ENCODE measurements at regions of chrX and their contacts with region 1.

Region 1: GRCh38 chrX:37745354-37745753 is 34.5 kb upstream of the CYBB start:
- H3K4me3 Mint-ChIP-seq: no peak overlapping the region
- H3K27ac Mint-ChIP-seq: peak overlapping the region; percentile 87
- H3K4me1 Mint-ChIP-seq: peaks cover 31% of the 10 kb centered on the region
- H3K27me3 Mint-ChIP-seq: no peaks in the 10 kb centered on the region

Region 2: GRCh38 chrX:37787423-37787869 is 42.1 kb after region 1 on chrX:
- intact Hi-C with region 1: loop called (anchors 5 kb)
- H3K4me3 Mint-ChIP-seq: peak overlapping the region; percentile 26
- H3K27ac Mint-ChIP-seq: peak overlapping the region; percentile 83
- H3K4me1 Mint-ChIP-seq: peaks cover 30% of the 10 kb centered on the region
- H3K27me3 Mint-ChIP-seq: no peaks in the 10 kb centered on the region

Region 3: DNA sequence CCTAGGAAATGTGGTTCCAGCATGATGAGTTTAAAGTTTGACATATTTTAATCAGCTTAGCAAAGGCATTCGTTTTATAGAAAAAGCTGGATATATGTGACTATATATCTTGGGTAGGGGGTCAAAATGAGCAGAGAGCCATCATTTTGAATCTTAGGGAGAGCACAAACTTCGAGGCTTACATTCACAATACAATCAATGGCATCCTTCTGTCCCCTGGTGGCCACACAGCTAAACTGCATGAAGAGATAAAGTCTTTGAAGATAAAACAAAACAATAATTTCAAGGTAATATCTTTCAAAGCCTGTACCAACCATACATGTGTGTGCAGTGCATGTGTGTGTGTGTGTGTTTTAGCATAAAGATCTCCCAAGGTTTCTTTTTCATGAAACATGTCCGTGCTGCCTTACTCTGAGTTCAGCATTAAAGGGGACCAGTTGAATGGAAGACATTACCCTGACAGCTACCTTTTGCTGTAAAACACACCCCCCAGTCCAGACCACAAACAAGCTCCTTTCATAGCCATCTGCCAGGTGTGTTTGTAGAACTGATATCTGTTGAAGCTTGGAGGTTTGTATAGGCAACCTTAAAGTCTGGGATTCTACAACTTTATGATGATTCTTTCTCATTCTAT is 80.0 kb after region 1 on chrX:
- intact Hi-C with region 1: loop called (anchors 1 kb)
- H3K4me3 Mint-ChIP-seq: no peak overlapping the region
- H3K27ac Mint-ChIP-seq: peak overlapping the region; percentile 4
- H3K4me1 Mint-ChIP-seq: peaks cover 31% of the 10 kb centered on the region
- H3K27me3 Mint-ChIP-seq: no peaks in the 10 kb centered on the region